Cardiac septum (tissue), 1 donor: ENCODE measurements at regions of chr9 and their contacts with region 1.

Region 1: DNA sequence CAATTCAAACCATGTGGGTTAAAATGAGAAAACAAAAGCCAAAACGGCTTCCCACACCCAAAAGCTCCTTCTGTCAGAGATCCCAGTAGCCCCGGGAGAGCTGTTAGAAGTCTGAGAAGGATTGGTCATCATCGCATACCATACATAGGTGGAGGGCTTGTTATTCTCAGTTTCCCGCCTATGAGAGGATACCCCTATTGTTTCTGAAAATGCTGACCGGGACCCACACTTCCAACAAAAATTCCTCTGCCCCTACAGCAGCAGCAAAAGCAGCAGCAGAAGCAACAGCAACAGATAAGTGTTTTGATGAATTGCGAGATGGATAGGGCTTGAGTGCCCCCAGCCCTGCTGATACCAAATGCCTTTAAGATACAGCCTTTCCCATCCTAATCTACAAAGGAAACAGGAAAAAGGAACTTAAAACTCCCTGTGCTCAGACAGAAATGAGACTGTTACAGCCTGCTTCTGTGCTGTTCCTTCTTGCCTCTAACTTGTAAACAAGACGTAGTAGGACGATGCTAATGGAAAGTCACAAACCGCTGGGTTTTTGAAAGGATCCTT is at the start of gene TEK:
- DNase-seq: no peak
- total RNA-seq, gene TEK: 21.0 TPM

Region 2: GRCh38 chr9:27184556-27185351 is 75.7 kb after region 1 on chr9:
- intact Hi-C with region 1: loop called (anchors 2 kb)
- DNase-seq: no peak